ENCODE measurements at regions of chr1 and their contacts with region 1.

Region 1: DNA sequence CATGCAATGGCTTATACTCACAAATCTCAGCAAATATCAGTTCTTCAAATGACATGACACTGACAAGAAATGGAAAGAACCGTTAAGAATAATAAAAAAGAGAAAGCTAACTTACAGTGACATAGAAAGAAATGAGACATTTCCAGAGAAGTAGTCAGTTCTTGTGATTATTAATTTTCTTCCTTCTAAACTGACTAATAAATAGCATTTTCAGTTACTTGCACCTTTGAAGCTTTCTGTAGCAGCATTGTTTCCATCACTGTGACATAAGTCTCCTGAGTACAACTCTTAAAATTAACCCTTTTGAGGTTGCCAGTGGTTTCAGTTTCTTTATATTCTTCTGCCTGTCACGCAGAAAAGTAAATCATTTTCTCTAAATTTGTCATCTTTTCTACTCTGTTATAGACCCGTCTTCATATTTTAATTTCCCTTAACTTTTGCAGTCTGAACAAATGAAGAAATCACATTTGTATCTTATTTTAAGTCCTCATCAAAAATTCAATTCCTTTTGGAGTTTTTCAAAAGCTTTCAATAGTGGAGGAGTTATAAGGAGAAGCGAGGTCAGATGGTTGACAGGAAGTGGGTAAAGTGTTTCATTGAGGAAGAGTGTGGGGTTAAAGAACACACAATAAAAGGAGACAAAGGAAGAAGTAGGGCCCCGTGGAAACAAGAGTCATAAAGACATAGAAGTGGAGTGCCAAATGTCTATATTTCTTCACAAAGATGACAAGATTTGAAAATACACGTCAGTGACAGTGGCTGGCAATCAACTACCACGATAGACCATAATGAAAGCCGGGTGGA is 57.9 kb upstream of the S1PR1 start:
- DNase-seq: peak; percentile 27
- H3K4me3 Mint-ChIP-seq: peak overlapping the region; percentile 76
- H3K27ac Mint-ChIP-seq: peak overlapping the region; percentile 98
- H3K4me1 Mint-ChIP-seq: peaks cover 65% of the 10 kb centered on the region
- H3K27me3 Mint-ChIP-seq: no peaks in the 10 kb centered on the region

Region 2: GRCh38 chr1:100377590-100378361 is 801.1 kb before region 1 on chr1:
- intact Hi-C with region 1: loop called (anchors 1 kb)
- DNase-seq: no peak
- H3K4me3 Mint-ChIP-seq: peak overlapping the region; percentile 38
- H3K27ac Mint-ChIP-seq: peak overlapping the region; percentile 75
- H3K4me1 Mint-ChIP-seq: peaks cover 55% of the 10 kb centered on the region
- H3K27me3 Mint-ChIP-seq: peaks cover 2% of the 10 kb centered on the region

Region 3: DNA sequence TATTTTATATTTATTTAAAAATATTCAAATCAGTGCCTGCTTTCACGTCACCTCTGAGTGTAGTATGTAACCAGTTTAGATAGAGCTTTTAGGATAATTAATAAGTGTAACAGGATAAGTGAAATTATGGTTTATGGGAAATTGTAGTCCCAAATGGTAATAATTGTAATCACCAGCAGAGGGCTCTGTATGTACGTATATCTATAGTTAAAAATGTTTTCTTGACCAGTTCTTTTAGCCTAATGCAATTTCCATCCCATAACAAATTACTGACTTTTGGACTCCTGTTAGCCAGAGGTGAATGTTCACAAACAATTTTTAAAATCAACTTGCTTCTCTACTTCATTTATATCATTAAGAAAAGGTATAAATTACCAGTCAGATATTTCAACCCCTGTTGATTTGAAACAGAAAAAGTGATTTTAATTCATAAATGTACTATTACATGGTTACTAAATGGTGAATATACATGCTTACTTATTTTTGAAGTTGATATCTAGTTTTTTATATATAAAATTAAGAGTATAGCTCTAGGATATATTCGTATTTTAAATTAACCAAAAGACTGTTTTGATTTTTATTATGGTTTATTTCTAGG is 257.7 kb before region 1 on chr1:
- intact Hi-C with region 1: loop called (anchors 2 kb)
- DNase-seq: no peak
- H3K4me3 Mint-ChIP-seq: no peak overlapping the region
- H3K27ac Mint-ChIP-seq: no peak overlapping the region
- H3K4me1 Mint-ChIP-seq: peaks cover 29% of the 10 kb centered on the region
- H3K27me3 Mint-ChIP-seq: no peaks in the 10 kb centered on the region

Region 4: GRCh38 chr1:101081496-101082488 is 97.1 kb before region 1 on chr1:
- intact Hi-C with region 1: loop called (anchors 1 kb)
- DNase-seq: peak; percentile 58
- H3K4me3 Mint-ChIP-seq: peak overlapping the region; percentile 38
- H3K27ac Mint-ChIP-seq: peak overlapping the region; percentile 61
- H3K4me1 Mint-ChIP-seq: peaks cover 57% of the 10 kb centered on the region
- H3K27me3 Mint-ChIP-seq: no peaks in the 10 kb centered on the region

Region 5: GRCh38 chr1:101167891-101168290 is 11.0 kb before region 1 on chr1:
- intact Hi-C with region 1: loop called (anchors 1 kb)
- DNase-seq: no peak
- H3K4me3 Mint-ChIP-seq: no peak overlapping the region
- H3K27ac Mint-ChIP-seq: peak overlapping the region; percentile 19
- H3K4me1 Mint-ChIP-seq: peaks cover 32% of the 10 kb centered on the region
- H3K27me3 Mint-ChIP-seq: no peaks in the 10 kb centered on the region

Region 6: DNA sequence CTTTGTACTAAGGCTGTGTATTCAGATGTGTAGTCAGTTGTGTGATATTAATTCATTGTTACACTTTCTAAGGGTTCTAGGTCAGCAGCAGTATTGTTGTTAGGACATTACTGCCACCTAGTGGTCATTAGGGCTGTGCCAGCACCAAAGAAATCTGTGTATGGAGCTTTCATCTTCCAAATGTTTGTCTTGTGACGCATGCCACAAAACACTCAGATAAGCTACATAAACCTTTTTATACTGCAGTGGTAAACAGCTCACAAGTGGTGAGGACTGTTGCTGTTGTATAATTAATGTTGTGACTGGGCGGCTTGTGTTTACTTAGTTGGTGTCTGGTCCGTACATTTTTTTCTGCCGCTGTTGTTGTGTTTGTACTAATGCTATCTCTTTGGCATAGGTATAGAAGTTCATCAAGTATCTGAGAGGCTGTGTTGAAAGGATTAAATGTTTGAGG is 109.6 kb after region 1 on chr1:
- intact Hi-C with region 1: loop called (anchors 1 kb)
- DNase-seq: peak; percentile 50
- H3K4me3 Mint-ChIP-seq: no peak overlapping the region
- H3K27ac Mint-ChIP-seq: no peak overlapping the region
- H3K4me1 Mint-ChIP-seq: peaks cover 83% of the 10 kb centered on the region
- H3K27me3 Mint-ChIP-seq: peaks cover 1% of the 10 kb centered on the region

Measured in activated T-helper 1 cell treated with anti-CD3 and anti-CD28 coated beads, Interleukin-12 subunit alpha, Interleukin-12 subunit beta, Interleukin-2, Interleukin-4 antibody, amounts not matched to agents 30 ng/mL and 10 ng/mL and 1 ng/mL, durations not matched to agents 14 hours and 24 hours and 36 hours (primary cell).